CD4-positive, alpha-beta memory T cell (primary cell): ENCODE measurements at regions of chr1 and their contacts with region 1.

Region 1: GRCh38 chr1:169711469-169712281 is at the start of gene SELL:
- DNase-seq: peak; percentile 75 to 83 (median 78)
- H3K4me3 ChIP-seq: peak within 1 kb of the TSS; percentile 55 to 61
- H3K4me3 Mint-ChIP-seq: peak within 1 kb of the TSS; percentile 87 to 96 (median 92)
- H3K27ac ChIP-seq: peak within 1 kb of the TSS; percentile 48
- H3K27ac Mint-ChIP-seq: peak within 1 kb of the TSS; percentile 70 to 95 (median 86)
- H3K4me1 ChIP-seq: peaks cover 18% of the 10 kb centered on the region
- H3K4me1 Mint-ChIP-seq: peaks cover 16 to 28% (median 24%) of the 10 kb centered on the region in 4 donors
- H3K27me3 ChIP-seq: no peaks in the 10 kb centered on the region
- H3K27me3 Mint-ChIP-seq: peaks cover 3 to 4% of the 10 kb centered on the region in 2 donors
- total RNA-seq, gene SELL: 378 to 396 TPM

Region 2: DNA sequence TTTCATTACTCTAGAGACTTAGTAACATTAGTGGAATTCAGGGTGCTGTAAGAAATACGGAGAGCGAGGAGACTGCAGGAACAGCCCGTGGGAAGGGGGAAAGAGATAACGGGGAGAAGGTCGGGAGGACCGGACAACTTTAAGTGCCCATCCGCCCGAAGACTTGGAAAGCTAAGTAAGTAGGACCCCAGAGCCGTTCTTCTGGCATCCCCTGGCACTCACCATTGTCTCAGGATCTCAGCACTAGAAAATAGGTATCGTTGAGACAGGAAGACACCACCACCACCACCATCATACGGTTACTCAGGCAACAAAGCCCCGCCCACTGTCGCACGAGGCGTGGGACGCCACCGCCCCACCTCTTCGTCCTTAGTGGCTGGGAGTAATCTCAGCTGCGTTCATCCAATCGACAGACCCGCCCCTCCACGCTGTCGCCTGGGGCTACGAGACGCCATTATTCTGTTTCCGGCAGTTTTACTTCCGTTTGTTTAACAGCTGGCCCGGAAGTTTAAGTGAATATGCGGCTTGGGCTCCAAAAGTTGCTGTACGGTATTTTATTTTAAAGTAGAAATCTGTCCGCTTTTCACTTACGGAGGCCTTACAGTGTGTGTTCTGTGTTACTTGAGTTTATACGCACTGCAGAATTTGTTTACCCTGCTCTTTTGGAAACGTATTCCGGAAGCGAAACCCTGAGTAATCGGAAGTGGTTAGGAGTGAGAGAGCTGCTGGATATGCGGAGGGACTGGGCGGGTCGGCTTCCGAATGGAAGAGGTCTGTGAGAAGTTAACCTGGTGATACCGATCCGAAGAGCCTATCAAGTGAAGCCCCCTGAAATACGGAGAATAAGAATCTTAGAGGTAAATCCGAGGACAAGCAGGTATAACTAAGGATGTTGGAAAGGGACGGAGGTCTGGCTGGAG is 343.9 kb before region 1 on chr1 and contains the starts of genes BLZF1 and NME7:
- CTCF ChIA-PET with region 1: interaction called, 4 read pairs
- POLR2A ChIA-PET with region 1: no interaction called
- intact Hi-C with region 1: loop called (anchors 5 kb)
- DNase-seq: peak; percentile 95 to 99 (median 98)
- H3K4me3 ChIP-seq: peak within 1 kb of the TSS; percentile 96
- H3K4me3 Mint-ChIP-seq: peak within 1 kb of the TSS in 3 of 8 donors; percentile 16 to 51 (median 24)
- H3K27ac ChIP-seq: peak within 1 kb of the TSS; percentile 71
- H3K27ac Mint-ChIP-seq: peak within 1 kb of the TSS in 3 of 7 donors; percentile 25 to 54 (median 33)
- H3K4me1 ChIP-seq: peaks cover 44% of the 10 kb centered on the region
- H3K4me1 Mint-ChIP-seq: peaks cover 22 to 31% (median 23%) of the 10 kb centered on the region in 4 donors
- H3K27me3 ChIP-seq: no peaks in the 10 kb centered on the region
- H3K27me3 Mint-ChIP-seq: no peaks in the 10 kb centered on the region
- total RNA-seq, gene BLZF1: 20.0 to 23.8 TPM
- total RNA-seq, gene NME7: 12.0 to 14.3 TPM

Region 3: DNA sequence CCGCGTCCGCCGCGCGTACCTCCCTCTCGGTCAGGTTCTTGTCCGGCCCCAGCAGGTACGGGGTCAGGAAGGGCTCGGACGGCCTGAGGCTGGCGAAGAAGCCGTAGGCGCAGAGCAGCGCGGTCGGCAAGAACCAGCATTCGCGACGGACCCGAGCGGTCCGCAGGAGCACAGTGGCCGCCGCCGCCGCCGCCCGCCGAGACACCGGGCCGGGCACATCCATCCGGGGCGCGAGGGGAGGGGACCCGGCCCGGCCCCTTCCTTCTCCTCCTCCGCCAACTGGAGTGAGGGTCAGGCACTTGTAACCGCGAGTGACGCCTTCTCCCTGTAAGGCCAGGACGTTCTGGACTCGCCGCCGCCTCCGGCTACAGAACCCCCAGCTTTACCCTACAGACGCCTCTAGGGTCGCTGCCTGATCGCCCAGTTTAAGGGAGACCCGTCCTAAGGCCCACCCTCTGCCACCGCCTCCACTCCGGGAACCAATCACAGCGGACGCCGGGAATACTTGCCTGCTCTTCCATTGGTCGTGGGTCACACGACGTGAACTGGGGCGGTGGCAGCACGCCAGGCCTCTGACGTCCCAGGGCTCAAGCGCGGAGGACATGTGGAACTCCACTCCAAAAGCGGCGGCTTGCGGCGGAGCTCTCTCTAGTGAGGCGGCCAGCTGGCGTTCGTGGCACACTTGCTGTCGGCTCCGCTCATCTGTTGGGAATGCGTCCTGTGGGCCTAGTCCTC is 226.0 kb before region 1 on chr1 and contains the start of gene SLC19A2:
- CTCF ChIA-PET with region 1: interaction called, 3 read pairs
- POLR2A ChIA-PET with region 1: no interaction called
- intact Hi-C with region 1: loop called (anchors 5 kb)
- DNase-seq: peak; percentile 89 to 96 (median 91)
- H3K4me3 ChIP-seq: peak within 1 kb of the TSS; percentile 60 to 63
- H3K4me3 Mint-ChIP-seq: peak within 1 kb of the TSS; percentile 93 to 97 (median 95)
- H3K27ac ChIP-seq: peak within 1 kb of the TSS; percentile 73
- H3K27ac Mint-ChIP-seq: peak within 1 kb of the TSS; percentile 88 to 96 (median 94)
- H3K4me1 ChIP-seq: peaks cover 20% of the 10 kb centered on the region
- H3K4me1 Mint-ChIP-seq: peaks cover 28 to 37% (median 30%) of the 10 kb centered on the region in 4 donors
- H3K27me3 ChIP-seq: no peaks in the 10 kb centered on the region
- H3K27me3 Mint-ChIP-seq: no peaks in the 10 kb centered on the region
- total RNA-seq, gene SLC19A2: 4.1 to 4.5 TPM

Region 4: DNA sequence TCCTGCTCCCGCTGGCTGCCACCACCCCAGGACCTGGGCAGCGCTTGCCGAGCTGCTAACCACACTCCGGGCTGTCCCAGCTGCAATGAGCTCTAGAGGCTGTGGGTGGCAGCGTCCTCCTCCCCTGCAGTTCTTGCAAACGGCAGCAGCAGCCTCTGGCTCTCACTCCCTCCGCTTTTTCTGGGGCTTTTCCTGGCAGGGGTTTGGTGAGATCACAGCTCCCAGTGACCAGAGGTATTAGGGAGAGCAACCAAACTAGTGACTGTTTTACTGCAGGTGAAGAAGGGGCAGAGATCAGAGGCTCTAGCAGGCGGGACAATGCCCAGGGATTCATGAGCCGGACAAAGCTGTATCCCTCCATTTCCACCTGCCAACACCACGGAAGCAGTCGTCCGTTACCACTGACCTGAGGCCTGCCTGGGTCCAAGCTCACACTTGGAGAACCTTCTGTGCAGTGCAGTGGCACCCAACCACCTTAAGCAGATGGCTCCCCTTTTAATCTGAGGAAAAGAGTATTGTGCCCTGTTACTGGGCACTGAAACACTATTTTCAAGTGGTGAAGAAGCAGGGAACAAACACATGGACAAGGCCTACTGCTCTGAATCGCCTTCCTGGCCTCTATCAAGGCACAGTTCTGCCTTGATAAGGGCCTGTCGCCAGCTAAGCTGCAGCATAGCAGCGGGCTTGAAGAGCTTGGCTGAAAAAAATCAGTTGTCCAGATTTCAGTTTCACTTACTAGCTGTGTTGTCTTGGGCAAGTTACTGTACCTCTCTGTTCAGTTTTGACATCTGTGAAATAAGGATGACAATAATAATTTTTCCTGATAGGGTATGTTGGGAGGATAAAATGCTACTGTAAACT is 125.0 kb before region 1 on chr1 and contains the start of gene F5:
- CTCF ChIA-PET with region 1: interaction called, 84 read pairs
- POLR2A ChIA-PET with region 1: interaction called, 18 read pairs
- intact Hi-C with region 1: loop called (anchors 1 kb)
- DNase-seq: peak; percentile 67 to 78 (median 72)
- H3K4me3 ChIP-seq: peak within 1 kb of the TSS; percentile 47 to 62
- H3K4me3 Mint-ChIP-seq: peak within 1 kb of the TSS; percentile 86 to 94 (median 89)
- H3K27ac ChIP-seq: peak within 1 kb of the TSS; percentile 36
- H3K27ac Mint-ChIP-seq: peak within 1 kb of the TSS; percentile 58 to 95 (median 74)
- H3K4me1 ChIP-seq: peaks cover 52% of the 10 kb centered on the region
- H3K4me1 Mint-ChIP-seq: peaks cover 15 to 51% (median 37%) of the 10 kb centered on the region in 4 donors
- H3K27me3 ChIP-seq: no peaks in the 10 kb centered on the region
- H3K27me3 Mint-ChIP-seq: peaks cover 2 to 11% of the 10 kb centered on the region in 2 donors
- total RNA-seq, gene F5: 4.9 to 6.1 TPM

Region 5: DNA sequence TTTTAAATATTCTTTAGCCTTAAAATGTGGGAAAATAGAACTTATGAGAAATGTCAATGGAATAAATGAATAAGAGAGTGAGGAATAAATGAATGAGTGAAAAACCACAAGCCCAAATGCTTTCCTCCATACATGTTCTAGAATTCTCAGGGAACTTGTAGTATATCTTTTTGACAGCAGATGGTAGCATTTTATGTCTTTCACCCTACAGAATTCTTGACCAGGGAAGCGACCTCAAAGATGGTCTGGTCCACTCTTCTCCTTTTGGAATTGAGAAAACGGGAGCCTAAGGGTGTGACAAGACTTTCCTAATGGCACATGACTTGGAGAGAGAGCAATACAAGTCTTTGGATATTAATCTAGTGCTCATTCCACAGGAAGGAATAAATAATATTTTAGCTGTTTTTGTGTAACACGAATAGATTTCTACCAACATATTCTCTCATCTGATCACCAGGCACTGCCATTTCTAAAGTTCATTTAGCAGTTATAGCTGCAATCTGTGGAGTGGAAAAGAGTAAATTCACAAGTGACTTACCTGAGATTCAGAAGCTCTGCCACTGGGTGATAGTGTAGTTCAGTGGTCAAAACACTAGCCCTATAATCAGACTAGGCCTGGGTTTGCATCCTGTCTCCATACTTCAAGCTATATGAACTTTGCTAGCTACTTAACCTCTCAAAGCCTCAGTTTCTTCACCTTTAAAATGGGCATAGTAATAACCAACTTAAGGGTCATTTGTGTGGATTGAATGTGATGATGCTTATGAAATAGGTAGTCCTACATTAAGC is 110.4 kb before region 1 on chr1:
- CTCF ChIA-PET with region 1: interaction called, 246 read pairs
- POLR2A ChIA-PET with region 1: interaction called, 78 read pairs
- intact Hi-C with region 1: loop called (anchors 1 kb)
- DNase-seq: peak in 4 of 5 donors; percentile 21 to 34 (median 30)
- H3K4me3 ChIP-seq: no peak overlapping the region
- H3K4me3 Mint-ChIP-seq: peak overlapping the region in 4 of 8 donors; percentile 15 to 66 (median 20)
- H3K27ac ChIP-seq: no peak overlapping the region
- H3K27ac Mint-ChIP-seq: peak overlapping the region; percentile 39 to 86 (median 67)
- H3K4me1 ChIP-seq: peaks cover 53% of the 10 kb centered on the region
- H3K4me1 Mint-ChIP-seq: peaks cover 38 to 58% (median 49%) of the 10 kb centered on the region in 4 donors
- H3K27me3 ChIP-seq: no peaks in the 10 kb centered on the region
- H3K27me3 Mint-ChIP-seq: no peaks in the 10 kb centered on the region

Region 6: DNA sequence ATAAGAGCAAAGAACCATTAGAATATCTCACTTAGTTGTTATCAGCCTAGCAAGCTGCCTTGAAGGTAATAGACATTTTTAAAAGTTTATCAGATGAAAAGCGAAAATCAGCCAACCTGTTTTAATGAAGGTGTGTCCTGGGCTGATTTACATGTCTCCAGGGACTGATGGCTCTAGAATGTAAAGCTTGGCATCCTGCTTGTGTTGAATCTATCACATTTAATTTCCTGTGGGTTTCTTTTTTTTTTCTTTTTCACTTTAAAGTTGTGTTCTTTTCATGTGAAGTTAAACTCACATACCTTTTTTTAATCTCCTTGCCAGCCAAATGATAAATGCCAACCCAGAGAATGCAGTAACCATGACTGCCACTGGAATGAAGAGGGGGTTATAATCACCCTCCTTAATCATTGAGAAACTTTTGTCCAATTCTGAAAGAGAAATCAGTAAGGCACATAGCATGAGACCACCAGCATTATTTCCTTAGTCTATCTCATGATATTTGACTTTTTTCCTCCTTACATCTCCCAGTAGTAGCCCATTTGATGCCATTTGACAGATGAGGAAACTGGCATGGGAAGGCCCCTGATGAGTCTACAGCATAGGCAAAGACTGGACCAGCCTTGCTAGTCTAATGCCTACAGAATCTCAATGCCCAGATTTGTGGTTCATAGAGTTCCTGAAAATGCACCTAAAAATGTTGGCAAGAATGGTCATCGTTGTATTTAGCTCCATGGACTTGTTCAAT is 10.2 kb before region 1 on chr1:
- CTCF ChIA-PET with region 1: interaction called, 85 read pairs
- POLR2A ChIA-PET with region 1: interaction called, 248 read pairs
- intact Hi-C with region 1: loop called (anchors 1 kb)
- DNase-seq: peak; percentile 35 to 58 (median 47)
- H3K4me3 ChIP-seq: peak overlapping the region in 1 of 2 donors; percentile 7
- H3K4me3 Mint-ChIP-seq: peak overlapping the region; percentile 13 to 88 (median 70)
- H3K27ac ChIP-seq: peak overlapping the region; percentile 7
- H3K27ac Mint-ChIP-seq: peak overlapping the region; percentile 30 to 92 (median 82)
- H3K4me1 ChIP-seq: peaks cover 100% of the 10 kb centered on the region
- H3K4me1 Mint-ChIP-seq: peaks cover 73 to 95% (median 85%) of the 10 kb centered on the region in 4 donors
- H3K27me3 ChIP-seq: no peaks in the 10 kb centered on the region
- H3K27me3 Mint-ChIP-seq: no peaks in the 10 kb centered on the region

Region 7: DNA sequence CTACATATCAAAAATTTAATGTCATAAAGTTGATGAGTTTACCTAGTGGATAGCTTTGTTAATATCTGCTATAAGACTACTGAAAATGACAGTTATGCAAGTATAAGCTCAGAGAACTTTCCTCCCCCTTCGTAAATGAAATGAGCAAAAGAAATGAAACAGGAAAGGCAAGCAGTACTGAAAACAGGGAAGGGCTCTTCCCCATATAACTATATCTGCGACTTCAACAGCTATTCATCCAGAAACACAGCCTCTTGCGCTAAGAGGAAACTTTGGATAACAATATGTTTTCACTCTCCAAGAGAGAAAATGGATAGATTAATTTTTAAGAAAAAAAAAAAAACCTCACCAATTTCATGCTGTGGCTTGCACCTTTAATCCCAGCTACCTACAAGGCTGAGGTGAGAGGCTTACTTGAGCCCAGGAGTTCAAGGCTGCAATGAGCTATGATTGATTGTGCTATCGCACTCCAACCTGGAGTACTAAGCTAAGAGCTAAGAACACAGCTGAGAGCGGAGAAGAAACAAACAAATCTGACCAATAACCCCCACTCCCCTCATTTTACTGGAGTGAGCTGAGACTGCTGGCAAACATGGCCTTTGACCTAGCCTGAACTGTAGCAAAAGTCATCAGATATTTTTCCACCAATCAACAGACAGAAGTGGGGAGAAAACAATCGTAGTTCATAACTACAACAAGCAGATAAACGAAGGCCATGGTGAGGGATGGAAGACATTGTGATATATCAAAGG is 54.1 kb after region 1 on chr1:
- CTCF ChIA-PET with region 1: no interaction called
- POLR2A ChIA-PET with region 1: no interaction called
- intact Hi-C with region 1: no loop called
- DNase-seq: no peak
- H3K4me3 ChIP-seq: no peak overlapping the region
- H3K4me3 Mint-ChIP-seq: no peak overlapping the region
- H3K27ac ChIP-seq: no peak overlapping the region
- H3K27ac Mint-ChIP-seq: no peak overlapping the region
- H3K4me1 ChIP-seq: no peaks in the 10 kb centered on the region
- H3K4me1 Mint-ChIP-seq: peaks cover 0 to 1% (median 0%) of the 10 kb centered on the region in 4 donors
- H3K27me3 ChIP-seq: no peaks in the 10 kb centered on the region
- H3K27me3 Mint-ChIP-seq: peaks cover 4 to 5% of the 10 kb centered on the region in 2 donors

Region 8: GRCh38 chr1:169809370-169810095 is 97.9 kb after region 1 on chr1:
- CTCF ChIA-PET with region 1: interaction called, 15 read pairs
- POLR2A ChIA-PET with region 1: no interaction called
- intact Hi-C with region 1: loop called (anchors 1 kb)
- DNase-seq: peak in 4 of 5 donors; percentile 31 to 37 (median 34)
- H3K4me3 ChIP-seq: no peak overlapping the region
- H3K4me3 Mint-ChIP-seq: no peak overlapping the region
- H3K27ac ChIP-seq: no peak overlapping the region
- H3K27ac Mint-ChIP-seq: peak overlapping the region in 1 of 7 donors; percentile 38
- H3K4me1 ChIP-seq: no peaks in the 10 kb centered on the region
- H3K4me1 Mint-ChIP-seq: peaks cover 0 to 1% (median 0%) of the 10 kb centered on the region in 4 donors
- H3K27me3 ChIP-seq: no peaks in the 10 kb centered on the region
- H3K27me3 Mint-ChIP-seq: no peaks in the 10 kb centered on the region

Region 9: GRCh38 chr1:169844941-169845608 is 133.4 kb after region 1 on chr1:
- CTCF ChIA-PET with region 1: no interaction called
- POLR2A ChIA-PET with region 1: no interaction called
- intact Hi-C with region 1: no loop called
- DNase-seq: no peak
- H3K4me3 ChIP-seq: no peak overlapping the region
- H3K4me3 Mint-ChIP-seq: no peak overlapping the region
- H3K27ac ChIP-seq: no peak overlapping the region
- H3K27ac Mint-ChIP-seq: no peak overlapping the region
- H3K4me1 ChIP-seq: no peaks in the 10 kb centered on the region
- H3K4me1 Mint-ChIP-seq: no peaks in the 10 kb centered on the region
- H3K27me3 ChIP-seq: no peaks in the 10 kb centered on the region
- H3K27me3 Mint-ChIP-seq: no peaks in the 10 kb centered on the region